ENCODE measurements at regions of chr1 and their contacts with region 1.

Region 1: GRCh38 chr1:224922404-224923164 is 6.9 kb upstream of the DNAH14 start:
- DNase-seq: no peak
- ATAC-seq: peak; percentile 98
- H3K4me3 Mint-ChIP-seq: no peak overlapping the region
- H3K27ac Mint-ChIP-seq: no peak overlapping the region
- H3K4me1 Mint-ChIP-seq: no peaks in the 10 kb centered on the region
- H3K27me3 Mint-ChIP-seq: peaks cover 1% of the 10 kb centered on the region
- CTCF ChIP-seq: peak; percentile 42

Region 2: GRCh38 chr1:224497714-224498573 is 424.6 kb before region 1 on chr1:
- CTCF ChIA-PET with region 1: interaction called, 14 read pairs
- POLR2A ChIA-PET with region 1: no interaction called
- DNase-seq: peak; percentile 54
- ATAC-seq: peak; percentile 52
- H3K4me3 Mint-ChIP-seq: peak overlapping the region; percentile 23
- H3K27ac Mint-ChIP-seq: peak overlapping the region; percentile 100
- H3K4me1 Mint-ChIP-seq: peaks cover 80% of the 10 kb centered on the region
- H3K27me3 Mint-ChIP-seq: peaks cover 4% of the 10 kb centered on the region; the same call in 1 of the 2 replicates
- CTCF ChIP-seq: no peak

Region 3: DNA sequence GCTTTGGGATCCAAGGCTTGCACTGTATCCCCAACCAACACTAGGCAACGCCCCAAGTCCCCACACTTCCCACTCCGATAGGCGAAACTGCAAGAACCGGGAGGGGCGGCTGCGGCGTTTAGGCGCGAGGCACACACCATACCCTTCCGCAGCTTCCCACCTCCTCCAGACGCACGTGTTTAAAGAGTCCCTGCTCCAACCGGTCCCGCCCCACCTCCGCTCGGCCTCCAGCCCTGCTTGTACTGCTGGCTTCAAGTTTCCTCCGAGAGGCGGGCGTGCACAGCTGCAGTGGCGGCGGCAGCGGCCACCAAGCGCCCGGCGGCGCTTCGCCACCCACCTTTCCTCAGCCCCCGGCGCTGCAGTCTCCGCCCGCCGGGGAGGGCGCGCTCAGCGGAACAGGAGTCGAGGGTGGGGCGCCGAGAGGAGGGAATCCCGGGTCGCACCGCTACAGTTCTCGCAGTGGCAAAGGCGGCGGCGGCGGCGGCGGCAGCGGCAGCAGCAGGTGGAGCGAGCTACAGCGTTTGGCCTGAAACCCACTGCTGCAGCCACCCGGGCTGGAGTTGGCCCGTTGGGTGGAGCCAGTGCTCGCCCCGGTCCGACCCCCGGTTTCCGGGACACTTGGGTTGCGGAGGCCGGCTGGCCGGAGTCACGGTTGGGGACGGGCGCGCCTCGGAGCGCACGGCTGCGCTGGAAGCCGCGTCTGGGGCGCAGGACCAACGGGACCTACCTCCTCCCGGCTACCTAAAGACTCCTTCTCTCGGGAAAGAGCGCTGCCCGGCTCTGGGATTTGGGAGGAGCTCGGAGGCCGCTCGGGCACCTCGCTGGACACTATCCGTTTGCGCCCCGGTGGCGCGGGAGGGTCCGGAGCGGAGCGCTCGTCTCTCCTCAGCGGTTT is 306.5 kb before region 1 on chr1 and contains the start of gene CNIH3:
- CTCF ChIA-PET with region 1: interaction called, 15 read pairs
- POLR2A ChIA-PET with region 1: no interaction called
- DNase-seq: peak; percentile 83
- ATAC-seq: peak; percentile 80
- H3K4me3 Mint-ChIP-seq: peak within 1 kb of the TSS; percentile 85
- H3K27ac Mint-ChIP-seq: no peak within 1 kb of the TSS
- H3K4me1 Mint-ChIP-seq: peaks cover 30% of the 10 kb centered on the region
- H3K27me3 Mint-ChIP-seq: peaks cover 86% of the 10 kb centered on the region
- CTCF ChIP-seq: no peak
- total RNA-seq, gene CNIH3: 5.0 to 8.1 TPM (median 5.8 TPM) in 3 replicates

Region 4: GRCh38 chr1:224700915-224701531 is 221.6 kb before region 1 on chr1:
- CTCF ChIA-PET with region 1: interaction called, 56 read pairs
- POLR2A ChIA-PET with region 1: no interaction called
- DNase-seq: peak; percentile 73
- ATAC-seq: peak; percentile 82
- H3K4me3 Mint-ChIP-seq: no peak overlapping the region
- H3K27ac Mint-ChIP-seq: no peak overlapping the region
- H3K4me1 Mint-ChIP-seq: peaks cover 41% of the 10 kb centered on the region
- H3K27me3 Mint-ChIP-seq: no peaks in the 10 kb centered on the region
- CTCF ChIP-seq: peak; percentile 23; the same call in 1 of the 2 replicates

Region 5: GRCh38 chr1:224879162-224879803 is 43.3 kb before region 1 on chr1:
- CTCF ChIA-PET with region 1: interaction called, 11 read pairs
- POLR2A ChIA-PET with region 1: no interaction called
- DNase-seq: no peak
- ATAC-seq: no peak
- H3K4me3 Mint-ChIP-seq: no peak overlapping the region
- H3K27ac Mint-ChIP-seq: no peak overlapping the region
- H3K4me1 Mint-ChIP-seq: peaks cover 64% of the 10 kb centered on the region
- H3K27me3 Mint-ChIP-seq: no peaks in the 10 kb centered on the region; the same call in 1 of the 2 replicates
- CTCF ChIP-seq: no peak

Region 6: GRCh38 chr1:225070972-225071371 is 148.4 kb after region 1 on chr1:
- CTCF ChIA-PET with region 1: no interaction called
- POLR2A ChIA-PET with region 1: no interaction called
- DNase-seq: no peak
- ATAC-seq: no peak
- H3K4me3 Mint-ChIP-seq: no peak overlapping the region
- H3K27ac Mint-ChIP-seq: no peak overlapping the region
- H3K4me1 Mint-ChIP-seq: no peaks in the 10 kb centered on the region
- H3K27me3 Mint-ChIP-seq: no peaks in the 10 kb centered on the region; the same call in 1 of the 2 replicates
- CTCF ChIP-seq: no peak